CD8-positive, alpha-beta memory T cell (primary cell): ENCODE measurements at regions of chr9 and their contacts with region 1.

Region 1: DNA sequence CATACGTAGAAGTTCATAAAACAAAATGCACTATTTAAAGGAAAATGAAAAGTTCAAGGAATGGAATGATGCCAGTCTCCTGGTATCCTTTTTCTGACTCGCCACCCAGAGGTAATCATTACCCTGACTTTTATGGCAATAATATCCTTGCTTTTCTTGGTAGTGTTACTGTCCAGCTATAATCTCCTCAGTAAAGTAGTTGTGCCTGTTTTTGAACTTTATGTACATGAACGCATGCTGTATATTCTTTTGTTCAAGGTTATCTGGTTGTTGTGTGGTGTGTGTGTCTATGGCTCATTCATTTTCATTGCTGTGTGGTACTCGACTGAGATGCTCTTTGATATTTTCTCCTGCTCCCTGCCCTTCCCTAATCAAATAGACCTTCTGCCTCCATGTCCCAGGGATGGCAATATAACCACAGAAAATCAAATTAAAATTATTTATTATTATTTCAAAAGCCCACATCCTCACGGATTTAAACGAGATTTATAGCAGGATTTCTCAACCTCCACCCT is 29.2 kb upstream of the FBP1 start:
- DNase-seq: no peak
- H3K4me3 ChIP-seq: no peak overlapping the region
- H3K4me3 Mint-ChIP-seq: peak overlapping the region in 6 of 7 donors; percentile 87 to 98 (median 94)
- H3K27ac ChIP-seq: no peak overlapping the region
- H3K27ac Mint-ChIP-seq: peak overlapping the region in 1 of 8 donors; percentile 78
- H3K4me1 ChIP-seq: no peaks in the 10 kb centered on the region
- H3K4me1 Mint-ChIP-seq: peaks cover 5 to 15% (median 6%) of the 10 kb centered on the region in 3 donors
- H3K27me3 ChIP-seq: no peaks in the 10 kb centered on the region
- H3K27me3 Mint-ChIP-seq: peaks cover 3 to 27% of the 10 kb centered on the region in 2 donors

Region 2: GRCh38 chr9:94603259-94604160 is 65.0 kb before region 1 on chr9:
- CTCF ChIA-PET with region 1: no interaction called
- POLR2A ChIA-PET with region 1: no interaction called
- DNase-seq: peak; percentile 29 to 57 (median 35)
- H3K4me3 ChIP-seq: no peak overlapping the region
- H3K4me3 Mint-ChIP-seq: peak overlapping the region in 1 of 7 donors; percentile 16
- H3K27ac ChIP-seq: no peak overlapping the region
- H3K27ac Mint-ChIP-seq: no peak overlapping the region
- H3K4me1 ChIP-seq: no peaks in the 10 kb centered on the region
- H3K4me1 Mint-ChIP-seq: peaks cover 6 to 7% (median 7%) of the 10 kb centered on the region in 3 donors
- H3K27me3 ChIP-seq: no peaks in the 10 kb centered on the region
- H3K27me3 Mint-ChIP-seq: peaks cover 6 to 24% of the 10 kb centered on the region in 2 donors

Region 3: GRCh38 chr9:94726495-94727191 is 58.2 kb after region 1 on chr9 and contains the start of gene AOPEP:
- CTCF ChIA-PET with region 1: interaction called, 10 read pairs
- POLR2A ChIA-PET with region 1: interaction called, 8 read pairs
- DNase-seq: peak; percentile 98 to 100 (median 99)
- H3K4me3 ChIP-seq: peak within 1 kb of the TSS; percentile 92
- H3K4me3 Mint-ChIP-seq: peak within 1 kb of the TSS; percentile 84 to 100 (median 98)
- H3K27ac ChIP-seq: peak within 1 kb of the TSS; percentile 95
- H3K27ac Mint-ChIP-seq: peak within 1 kb of the TSS; percentile 91 to 100 (median 99)
- H3K4me1 ChIP-seq: peaks cover 12% of the 10 kb centered on the region
- H3K4me1 Mint-ChIP-seq: peaks cover 7 to 24% (median 10%) of the 10 kb centered on the region in 3 donors
- H3K27me3 ChIP-seq: no peaks in the 10 kb centered on the region
- H3K27me3 Mint-ChIP-seq: peaks cover 0 to 3% of the 10 kb centered on the region in 2 donors
- total RNA-seq, gene AOPEP: 6.9 to 7.1 TPM